ENCODE measurements at regions of chr18 and their contacts with region 1.

Region 1: GRCh38 chr18:57881818-57882413 is 78.8 kb upstream of the ATP8B1 start:
- DNase-seq: peak; percentile 70
- ATAC-seq: peak; percentile 87
- H3K4me3 Mint-ChIP-seq: no peak overlapping the region
- H3K27ac Mint-ChIP-seq: no peak overlapping the region
- H3K4me1 Mint-ChIP-seq: no peaks in the 10 kb centered on the region
- H3K27me3 Mint-ChIP-seq: peaks cover 9% of the 10 kb centered on the region
- CTCF ChIP-seq: peak; percentile 91

Region 2: GRCh38 chr18:57910817-57911216 is 28.9 kb after region 1 on chr18:
- CTCF ChIA-PET with region 1: interaction called, 16 read pairs
- POLR2A ChIA-PET with region 1: no interaction called
- intact Hi-C with region 1: no loop called
- DNase-seq: peak; percentile 47
- ATAC-seq: no peak
- H3K4me3 Mint-ChIP-seq: no peak overlapping the region
- H3K27ac Mint-ChIP-seq: no peak overlapping the region
- H3K4me1 Mint-ChIP-seq: peaks cover 2% of the 10 kb centered on the region
- H3K27me3 Mint-ChIP-seq: peaks cover 7% of the 10 kb centered on the region
- CTCF ChIP-seq: peak; percentile 32

Region 3: GRCh38 chr18:57931038-57931437 is 49.1 kb after region 1 on chr18:
- CTCF ChIA-PET with region 1: no interaction called
- POLR2A ChIA-PET with region 1: no interaction called
- intact Hi-C with region 1: no loop called
- DNase-seq: no peak
- ATAC-seq: no peak
- H3K4me3 Mint-ChIP-seq: no peak overlapping the region
- H3K27ac Mint-ChIP-seq: no peak overlapping the region
- H3K4me1 Mint-ChIP-seq: no peaks in the 10 kb centered on the region
- H3K27me3 Mint-ChIP-seq: peaks cover 2% of the 10 kb centered on the region
- CTCF ChIP-seq: no peak

Region 4: GRCh38 chr18:58009166-58009565 is 127.2 kb after region 1 on chr18:
- CTCF ChIA-PET with region 1: no interaction called
- POLR2A ChIA-PET with region 1: no interaction called
- intact Hi-C with region 1: no loop called
- DNase-seq: no peak
- ATAC-seq: no peak
- H3K4me3 Mint-ChIP-seq: no peak overlapping the region
- H3K27ac Mint-ChIP-seq: no peak overlapping the region
- H3K4me1 Mint-ChIP-seq: no peaks in the 10 kb centered on the region
- H3K27me3 Mint-ChIP-seq: peaks cover 8% of the 10 kb centered on the region
- CTCF ChIP-seq: no peak

Region 5: DNA sequence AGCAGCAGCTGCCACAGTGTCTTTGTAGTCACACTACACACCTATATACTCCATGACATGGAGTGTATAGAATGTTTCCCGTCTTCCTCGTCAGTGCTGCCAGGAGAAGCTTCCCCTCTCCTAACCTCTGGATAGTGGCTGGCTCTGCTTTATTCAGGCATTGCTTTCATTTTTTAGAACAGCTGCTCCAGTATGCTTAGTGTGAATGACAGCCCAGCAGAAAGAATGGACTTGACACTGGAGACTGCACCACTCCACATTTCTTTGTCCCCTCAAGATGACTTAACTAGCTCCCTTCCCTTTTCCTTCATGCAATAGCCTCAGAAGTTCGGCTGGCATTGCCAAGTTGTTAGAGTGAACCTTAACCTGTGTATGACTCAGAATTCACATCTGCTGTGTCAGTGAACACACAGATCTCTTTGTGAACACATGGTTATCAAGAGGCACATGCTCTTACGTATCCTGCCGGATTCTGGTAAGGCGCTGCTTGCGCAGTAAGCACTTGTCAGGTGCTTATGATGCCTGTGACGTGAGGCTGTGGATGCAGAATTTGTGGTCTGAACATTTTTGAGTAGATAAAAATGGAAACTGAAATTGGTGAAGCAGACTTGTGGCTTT is 236.0 kb after region 1 on chr18:
- CTCF ChIA-PET with region 1: interaction called, 24 read pairs
- POLR2A ChIA-PET with region 1: no interaction called
- intact Hi-C with region 1: loop called (anchors 5 kb)
- DNase-seq: no peak
- ATAC-seq: no peak
- H3K4me3 Mint-ChIP-seq: no peak overlapping the region
- H3K27ac Mint-ChIP-seq: no peak overlapping the region
- H3K4me1 Mint-ChIP-seq: peaks cover 6% of the 10 kb centered on the region
- H3K27me3 Mint-ChIP-seq: no peaks in the 10 kb centered on the region
- CTCF ChIP-seq: no peak

Region 6: GRCh38 chr18:58125183-58125582 is 243.3 kb after region 1 on chr18:
- CTCF ChIA-PET with region 1: interaction called, 24 read pairs
- POLR2A ChIA-PET with region 1: no interaction called
- intact Hi-C with region 1: loop called (anchors 5 kb)
- DNase-seq: no peak
- ATAC-seq: no peak
- H3K4me3 Mint-ChIP-seq: no peak overlapping the region
- H3K27ac Mint-ChIP-seq: no peak overlapping the region
- H3K4me1 Mint-ChIP-seq: peaks cover 4% of the 10 kb centered on the region
- H3K27me3 Mint-ChIP-seq: no peaks in the 10 kb centered on the region
- CTCF ChIP-seq: no peak

Region 7: DNA sequence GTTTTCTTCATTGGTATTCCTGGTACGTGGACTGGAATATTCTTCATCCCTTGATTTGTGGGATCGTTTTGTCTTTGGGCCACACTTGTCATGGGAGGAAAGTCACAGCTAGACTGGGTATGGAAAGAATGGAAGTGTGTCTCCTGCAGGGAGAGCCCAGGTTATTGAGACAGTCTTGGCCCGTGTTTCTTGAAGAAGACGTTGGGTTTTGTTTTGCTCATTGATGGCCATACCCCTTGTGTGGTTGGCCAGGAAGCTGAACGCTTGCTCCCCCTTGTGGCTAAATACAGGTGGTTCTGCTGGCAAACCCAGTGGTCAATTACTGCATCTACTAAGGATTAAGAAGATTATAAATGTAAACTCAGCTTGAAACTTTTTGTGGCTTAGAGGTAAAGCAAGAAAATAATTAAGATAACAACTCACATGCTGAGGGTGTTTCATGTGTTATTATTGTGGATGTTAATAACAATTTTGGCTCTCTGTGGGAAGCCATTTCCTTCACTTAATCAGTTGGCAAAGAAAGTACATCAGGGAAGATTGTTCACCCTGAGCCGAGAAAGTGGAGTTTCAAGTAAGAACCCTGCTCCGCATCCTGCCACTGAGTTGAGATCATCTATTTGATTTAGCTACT is 253.9 kb after region 1 on chr18:
- CTCF ChIA-PET with region 1: interaction called, 4 read pairs
- POLR2A ChIA-PET with region 1: no interaction called
- intact Hi-C with region 1: loop called (anchors 5 kb)
- DNase-seq: peak; percentile 68
- ATAC-seq: peak; percentile 79
- H3K4me3 Mint-ChIP-seq: no peak overlapping the region
- H3K27ac Mint-ChIP-seq: no peak overlapping the region
- H3K4me1 Mint-ChIP-seq: peaks cover 15% of the 10 kb centered on the region
- H3K27me3 Mint-ChIP-seq: peaks cover 19% of the 10 kb centered on the region
- CTCF ChIP-seq: peak; percentile 74

Region 8: GRCh38 chr18:58180738-58181353 is 298.9 kb after region 1 on chr18:
- CTCF ChIA-PET with region 1: interaction called, 12 read pairs
- POLR2A ChIA-PET with region 1: no interaction called
- intact Hi-C with region 1: no loop called
- DNase-seq: peak; percentile 80
- ATAC-seq: peak; percentile 58
- H3K4me3 Mint-ChIP-seq: no peak overlapping the region
- H3K27ac Mint-ChIP-seq: no peak overlapping the region
- H3K4me1 Mint-ChIP-seq: no peaks in the 10 kb centered on the region
- H3K27me3 Mint-ChIP-seq: peaks cover 1% of the 10 kb centered on the region
- CTCF ChIP-seq: peak; percentile 83